ENCODE measurements at regions of chr17 and their contacts with region 1.

Region 1: GRCh38 chr17:8189711-8190477 is at the start of gene BORCS6:
- DNase-seq: peak; percentile 94 to 97 (median 95)
- H3K4me3 ChIP-seq: peak within 1 kb of the TSS; percentile 97
- H3K27ac ChIP-seq: peak within 1 kb of the TSS; percentile 72 to 84
- H3K4me1 ChIP-seq: peaks cover 16% of the 10 kb centered on the region
- H3K27me3 ChIP-seq: no peaks in the 10 kb centered on the region
- CTCF ChIP-seq: no peak
- EP300 ChIP-seq: no peak
- POLR2A ChIP-seq: peak; percentile 82
- total RNA-seq, gene BORCS6: 5.5 to 7.2 (median 6.7) TPM

Region 2: DNA sequence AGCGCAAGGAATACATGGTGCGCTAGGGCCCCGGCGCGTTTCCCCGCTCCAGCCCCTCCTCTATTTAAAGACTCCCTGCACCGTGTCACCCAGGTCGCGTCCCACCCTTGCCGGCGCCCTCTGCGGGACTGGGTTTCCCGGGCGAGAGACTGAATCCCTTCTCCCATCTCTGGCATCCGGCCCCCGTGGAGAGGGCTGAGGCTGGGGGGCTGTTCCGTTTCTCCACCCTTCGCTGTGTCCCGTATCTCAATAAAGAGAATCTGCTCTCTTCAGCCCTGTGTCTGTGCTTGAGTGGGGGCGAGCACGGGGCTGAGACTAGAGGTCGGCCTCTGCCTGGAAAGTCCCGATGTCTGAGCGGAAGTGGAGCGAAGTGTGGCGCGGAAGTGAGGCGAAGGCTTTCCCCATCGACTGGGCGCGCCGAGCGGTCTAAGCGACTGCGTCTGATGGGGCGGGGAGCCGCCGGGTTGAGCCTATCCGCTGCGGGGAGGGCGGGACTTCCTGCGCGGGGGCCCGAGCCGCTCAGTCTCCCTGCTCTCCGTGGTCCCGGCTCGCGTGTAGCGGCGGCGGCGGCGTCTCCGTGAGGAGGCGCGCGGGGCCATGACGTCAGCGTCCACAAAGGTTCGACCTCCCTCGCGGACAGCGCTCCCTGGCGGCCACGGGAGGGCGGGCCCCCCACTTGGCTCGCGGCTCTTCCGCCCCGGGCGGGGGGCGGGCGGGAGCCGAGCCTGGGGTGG is 1175.5 kb before region 1 on chr17:
- intact Hi-C with region 1: loop called in 1 of 4 experiments (anchors 10 kb)
- DNase-seq: peak; percentile 98 to 99 (median 98)
- H3K4me3 ChIP-seq: peak overlapping the region; percentile 83
- H3K27ac ChIP-seq: peak overlapping the region; percentile 93 to 94
- H3K4me1 ChIP-seq: peaks cover 17% of the 10 kb centered on the region
- H3K27me3 ChIP-seq: no peaks in the 10 kb centered on the region
- CTCF ChIP-seq: peak; percentile 49 to 81 (median 81)
- EP300 ChIP-seq: no peak
- POLR2A ChIP-seq: peak; percentile 83

Region 3: DNA sequence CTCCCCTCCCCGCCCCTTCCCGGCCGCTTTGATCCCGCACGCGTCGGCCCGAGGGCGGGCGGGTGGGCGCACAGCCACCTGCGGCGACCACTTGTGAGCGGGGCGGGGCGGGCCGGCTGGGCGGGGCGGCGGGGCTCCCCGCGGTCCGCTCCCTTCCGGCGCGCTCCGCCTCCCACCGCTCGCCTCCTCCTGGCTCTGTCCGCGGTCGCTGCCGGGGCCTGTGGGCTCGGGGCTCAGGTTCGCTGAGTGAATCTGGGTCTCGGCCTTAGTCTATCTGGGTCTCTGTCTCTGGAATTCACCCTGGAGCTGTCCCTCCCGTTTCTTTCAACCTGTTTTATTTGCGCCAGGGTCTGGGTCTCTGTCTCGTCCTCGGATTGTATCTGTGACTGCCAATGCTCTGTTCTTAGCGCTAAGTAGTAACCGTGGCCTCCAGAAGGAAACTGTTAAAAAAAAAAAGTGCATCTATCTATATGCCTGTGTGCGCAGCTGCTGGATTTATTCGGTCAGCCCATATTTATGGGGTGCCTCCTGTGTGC is 63.3 kb before region 1 on chr17:
- intact Hi-C with region 1: loop called in 2 of 4 experiments (anchors 2 to 5 kb)
- DNase-seq: peak; percentile 50 to 69 (median 56)
- H3K4me3 ChIP-seq: peak overlapping the region; percentile 46
- H3K27ac ChIP-seq: peak overlapping the region; percentile 35 to 40
- H3K4me1 ChIP-seq: peaks cover 11% of the 10 kb centered on the region
- H3K27me3 ChIP-seq: no peaks in the 10 kb centered on the region
- CTCF ChIP-seq: no peak
- EP300 ChIP-seq: no peak
- POLR2A ChIP-seq: no peak

Region 4: GRCh38 chr17:8138672-8139371 is 51.1 kb before region 1 on chr17:
- intact Hi-C with region 1: loop called in 2 of 4 experiments (anchors 5 kb)
- DNase-seq: peak; percentile 93 to 98 (median 96)
- H3K4me3 ChIP-seq: peak overlapping the region; percentile 0
- H3K27ac ChIP-seq: peak overlapping the region; percentile 49 to 84
- H3K4me1 ChIP-seq: no peaks in the 10 kb centered on the region
- H3K27me3 ChIP-seq: no peaks in the 10 kb centered on the region
- CTCF ChIP-seq: peak; percentile 90 to 96 (median 95)
- EP300 ChIP-seq: no peak
- POLR2A ChIP-seq: peak; percentile 38

Region 5: DNA sequence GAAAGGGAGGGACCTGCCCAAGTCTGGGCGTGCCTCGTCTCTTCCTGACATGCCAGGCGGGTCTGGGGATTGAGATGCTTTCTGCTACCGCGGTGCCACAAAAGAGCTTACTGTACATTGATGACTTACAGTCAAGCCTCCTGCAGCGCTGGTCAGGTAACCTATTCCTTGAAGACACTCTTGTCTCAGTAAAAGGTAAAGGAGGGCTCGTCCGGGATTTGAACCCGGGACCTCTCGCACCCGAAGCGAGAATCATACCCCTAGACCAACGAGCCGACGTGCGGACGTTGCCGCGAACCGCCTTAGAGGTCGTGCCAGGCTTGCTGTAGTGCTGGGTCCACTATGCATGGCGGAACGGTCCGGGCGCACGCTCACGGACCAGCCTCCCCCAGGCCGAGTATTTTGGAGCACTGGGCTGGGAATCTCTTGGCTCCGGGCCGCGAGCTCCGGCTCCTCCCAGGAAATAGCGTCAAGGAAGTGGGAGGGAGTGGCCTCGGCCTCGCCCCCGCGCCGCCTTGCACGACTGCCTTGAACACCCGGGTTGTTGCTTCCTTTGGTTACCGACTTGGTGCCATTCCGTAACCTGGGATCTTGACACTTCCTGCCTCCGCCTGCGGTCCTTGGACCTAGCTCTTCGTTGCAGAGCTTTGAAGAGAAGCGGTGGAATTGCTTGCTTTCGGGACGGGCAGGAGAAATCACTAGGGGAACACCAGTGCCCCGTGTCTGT is 32.9 kb after region 1 on chr17:
- intact Hi-C with region 1: loop called (anchors 2 to 5 kb)
- DNase-seq: peak; percentile 96 to 98 (median 97)
- H3K4me3 ChIP-seq: peak overlapping the region; percentile 69
- H3K27ac ChIP-seq: peak overlapping the region; percentile 96
- H3K4me1 ChIP-seq: peaks cover 6% of the 10 kb centered on the region
- H3K27me3 ChIP-seq: no peaks in the 10 kb centered on the region
- CTCF ChIP-seq: no peak
- EP300 ChIP-seq: no peak
- POLR2A ChIP-seq: peak; percentile 84

Region 6: GRCh38 chr17:8237175-8237574 is 47.3 kb after region 1 on chr17:
- intact Hi-C with region 1: no loop called
- DNase-seq: no peak
- H3K4me3 ChIP-seq: no peak overlapping the region
- H3K27ac ChIP-seq: no peak overlapping the region
- H3K4me1 ChIP-seq: no peaks in the 10 kb centered on the region
- H3K27me3 ChIP-seq: no peaks in the 10 kb centered on the region
- CTCF ChIP-seq: no peak
- EP300 ChIP-seq: no peak
- POLR2A ChIP-seq: no peak

Measured in ovary (tissue), 10 donors.